ENCODE measurements at regions of chr19 and their contacts with region 1.

Region 1: GRCh38 chr19:3313199-3313575 is 53.2 kb upstream of the NFIC start:
- DNase-seq: no peak
- ATAC-seq: no peak
- H3K4me3 ChIP-seq: no peak overlapping the region
- H3K27ac ChIP-seq: no peak overlapping the region
- H3K4me1 ChIP-seq: no peaks in the 10 kb centered on the region
- H3K27me3 ChIP-seq: peaks cover 6% of the 10 kb centered on the region; the same call in 1 of the 2 replicates
- CTCF ChIP-seq: no peak

Region 2: GRCh38 chr19:3324321-3324856 is 11.2 kb after region 1 on chr19:
- CTCF ChIA-PET with region 1: no interaction called
- POLR2A ChIA-PET with region 1: no interaction called
- in situ Hi-C with region 1: no loop called
- intact Hi-C with region 1: no loop called
- DNase-seq: peak; percentile 39
- ATAC-seq: peak; percentile 73
- H3K4me3 ChIP-seq: no peak overlapping the region
- H3K27ac ChIP-seq: no peak overlapping the region
- H3K4me1 ChIP-seq: no peaks in the 10 kb centered on the region
- H3K27me3 ChIP-seq: peaks cover 3% of the 10 kb centered on the region; the same call in 1 of the 2 replicates
- CTCF ChIP-seq: peak; percentile 89

Region 3: DNA sequence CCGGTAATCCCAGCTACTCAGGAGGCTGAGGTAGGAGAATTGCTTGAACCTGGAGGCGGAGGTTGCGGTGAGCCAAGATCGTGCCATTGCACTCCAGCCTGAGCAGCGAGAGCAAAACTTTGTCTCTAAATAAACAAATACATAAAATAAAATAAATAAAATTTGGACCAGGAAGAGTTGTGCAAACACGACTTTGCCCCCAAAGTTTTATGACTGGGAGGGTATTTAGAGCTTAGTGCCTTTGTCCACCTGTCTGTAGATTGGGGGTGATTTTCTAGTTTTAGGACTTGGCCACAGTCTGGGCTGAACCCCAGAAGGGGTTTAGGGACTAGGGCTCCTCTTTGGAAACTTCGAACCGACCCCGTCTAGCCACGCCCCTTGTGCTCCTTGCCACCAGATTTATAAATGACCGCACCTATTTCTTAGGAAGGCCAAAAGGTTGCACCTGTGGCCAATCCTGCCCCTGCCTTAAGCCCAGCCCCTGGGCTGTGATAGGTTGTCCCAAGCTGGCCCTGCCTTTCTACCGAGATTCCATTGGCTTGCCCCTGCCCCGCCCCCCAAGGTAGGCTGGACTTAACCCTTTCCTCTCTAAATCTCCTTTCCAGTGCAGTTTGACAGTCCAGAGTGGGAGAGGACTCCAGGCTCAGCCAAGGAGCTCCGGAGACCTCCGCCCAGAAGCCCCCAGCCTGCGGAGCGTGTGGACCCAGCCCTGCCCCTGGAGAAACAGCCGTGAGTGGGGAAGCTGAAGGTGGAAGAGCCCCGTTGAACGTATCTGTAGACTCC is 971.2 kb after region 1 on chr19:
- CTCF ChIA-PET with region 1: interaction called, 13 read pairs
- POLR2A ChIA-PET with region 1: no interaction called
- in situ Hi-C with region 1: no loop called
- intact Hi-C with region 1: no loop called
- DNase-seq: no peak
- ATAC-seq: peak; percentile 71
- H3K4me3 ChIP-seq: no peak overlapping the region
- H3K27ac ChIP-seq: no peak overlapping the region
- H3K4me1 ChIP-seq: peaks cover 4% of the 10 kb centered on the region; the same call in 1 of the 2 replicates
- H3K27me3 ChIP-seq: no peaks in the 10 kb centered on the region; the same call in 1 of the 2 replicates
- CTCF ChIP-seq: no peak

Region 4: DNA sequence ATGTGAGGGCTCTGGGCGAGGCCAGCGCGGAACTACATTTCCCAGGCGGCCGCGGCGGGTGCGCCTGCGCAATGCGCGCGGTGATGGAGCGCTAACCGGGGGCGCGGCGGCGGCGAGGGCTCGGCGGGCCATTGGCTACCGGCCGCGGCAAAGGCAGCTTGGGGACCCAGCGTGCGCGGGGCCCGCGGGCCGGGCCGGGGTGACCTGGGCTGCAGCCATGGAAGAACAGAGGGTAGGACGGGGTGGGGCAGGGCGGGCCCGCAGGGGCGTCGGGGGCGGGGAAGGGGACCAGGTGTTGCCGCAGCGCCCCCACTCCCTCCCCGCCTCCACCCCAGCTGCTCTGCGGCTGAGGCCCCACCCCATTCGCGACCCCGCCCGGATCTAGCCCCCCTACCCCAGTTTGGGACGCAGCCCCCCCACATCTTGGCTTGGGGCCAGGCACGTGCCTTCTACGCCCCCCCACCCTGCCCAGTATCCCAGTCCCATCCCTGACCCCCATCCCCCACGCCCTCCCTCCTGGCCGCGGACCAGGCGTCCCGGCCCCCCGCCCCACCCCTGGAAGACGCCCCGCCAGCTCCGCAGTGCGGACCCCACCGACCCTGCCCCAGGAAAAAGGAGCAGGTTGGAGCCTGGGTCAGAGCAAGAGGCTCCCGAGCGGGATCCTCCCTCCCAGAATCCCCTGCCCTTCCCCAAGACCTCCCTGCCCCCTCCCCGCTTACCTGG is 991.5 kb after region 1 on chr19 and contains the start of gene FSD1:
- CTCF ChIA-PET with region 1: no interaction called
- POLR2A ChIA-PET with region 1: no interaction called
- in situ Hi-C with region 1: no loop called
- intact Hi-C with region 1: no loop called
- DNase-seq: no peak
- ATAC-seq: peak; percentile 94
- H3K4me3 ChIP-seq: peak within 1 kb of the TSS; percentile 21 to 37; a peak in 3 of 4 replicates
- H3K27ac ChIP-seq: no peak within 1 kb of the TSS
- H3K4me1 ChIP-seq: peaks cover 5% of the 10 kb centered on the region
- H3K27me3 ChIP-seq: no peaks in the 10 kb centered on the region
- CTCF ChIP-seq: no peak
- total RNA-seq, gene FSD1: 12.1 TPM